GM13976 (cell line): ENCODE measurements at regions of chr20 and their contacts with region 1.

Region 1: DNA sequence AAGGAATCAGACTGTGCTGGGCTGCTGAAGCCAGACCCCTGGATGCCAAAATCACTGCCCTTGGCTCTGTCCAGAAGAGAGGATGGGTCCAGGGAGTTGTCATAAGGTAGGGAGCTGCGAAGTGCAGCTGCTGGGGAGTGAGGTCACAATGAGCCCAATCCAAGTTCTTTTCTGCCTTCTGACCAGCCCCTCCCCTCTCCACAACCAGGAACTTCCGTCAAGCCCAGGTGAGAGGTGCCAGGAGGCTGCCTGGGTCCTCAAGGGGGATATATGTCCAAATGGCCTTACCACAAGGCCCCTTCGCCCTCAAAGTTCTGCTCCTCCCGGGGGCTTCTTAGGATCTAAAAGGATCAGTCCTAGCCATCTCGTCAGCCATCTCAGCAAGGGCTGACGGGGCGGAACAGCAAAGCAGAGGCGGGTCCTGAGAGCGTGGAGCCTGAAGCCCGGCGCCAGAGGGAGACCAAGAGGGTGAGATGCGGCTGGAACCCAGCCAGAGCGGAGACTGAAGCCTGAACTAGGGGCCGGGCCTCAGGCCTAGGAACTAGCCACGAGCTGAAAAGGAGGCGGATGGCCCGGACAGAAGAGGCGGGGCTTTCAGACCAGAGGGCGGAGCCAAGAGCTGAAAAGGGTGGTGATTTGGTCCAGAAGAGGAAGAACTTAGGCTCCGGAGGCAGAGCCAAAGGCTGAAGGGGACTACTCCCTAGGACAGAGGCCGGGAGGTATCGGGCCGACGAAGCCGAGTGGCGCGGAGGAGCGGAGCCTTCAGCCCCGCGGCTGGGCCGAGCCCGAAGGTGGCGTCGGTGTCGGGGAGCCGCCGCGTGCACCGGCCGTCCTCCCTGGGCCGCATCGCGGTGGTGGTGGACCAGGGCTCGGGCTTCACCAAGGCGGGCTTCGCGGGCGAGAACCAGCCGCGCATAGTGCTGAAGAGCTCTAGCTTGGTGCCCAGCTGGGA is at the start of gene ACTL10:
- DNase-seq: peak; percentile 95
- CTCF ChIP-seq: no peak

Region 2: DNA sequence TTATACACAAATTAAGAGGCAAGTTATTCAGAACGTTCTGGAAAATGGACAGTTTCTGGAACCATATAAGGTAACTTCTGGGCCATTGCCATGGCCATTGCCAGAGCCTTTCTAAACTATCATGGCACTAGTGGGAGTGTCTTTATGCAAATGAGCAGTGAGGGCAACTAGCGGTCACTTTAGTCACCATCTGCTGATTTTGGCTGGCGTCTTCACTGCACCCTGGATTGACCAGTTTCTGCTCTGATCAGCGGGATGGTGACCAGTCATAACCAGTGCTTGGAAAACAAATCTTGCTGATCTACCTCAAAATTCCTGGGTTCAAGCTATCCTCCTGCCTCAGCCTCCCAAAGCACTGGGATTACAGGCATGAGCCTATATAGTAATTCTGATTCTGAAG is 215.7 kb before region 1 on chr20:
- in situ Hi-C with region 1: loop called (anchors 10 kb)
- DNase-seq: no peak
- CTCF ChIP-seq: no peak

Region 3: GRCh38 chr20:33515569-33516216 is 150.9 kb before region 1 on chr20:
- in situ Hi-C with region 1: no loop called
- DNase-seq: no peak
- CTCF ChIP-seq: no peak

Region 4: GRCh38 chr20:33948480-33948879 is 281.9 kb after region 1 on chr20:
- in situ Hi-C with region 1: no loop called
- DNase-seq: no peak
- CTCF ChIP-seq: no peak